Heart left ventricle (tissue), 16 donors: ENCODE measurements at regions of chrX and their contacts with region 1.

Region 1: GRCh38 chrX:109856974-109857373 is 123.9 kb upstream of the ACSL4 start:
- DNase-seq: no peak
- ATAC-seq: no peak
- H3K4me3 ChIP-seq: peak overlapping the region in 1 of 12 donors; percentile 24
- H3K27ac ChIP-seq: peak overlapping the region in 9 of 12 donors; percentile 0 to 59 (median 33)
- H3K4me1 ChIP-seq: peaks cover 0 to 16% (median 0%) of the 10 kb centered on the region in 12 donors
- H3K27me3 ChIP-seq: peaks cover 0 to 12% (median 0%) of the 10 kb centered on the region in 9 donors
- CTCF ChIP-seq: peak; percentile 68 to 85 (median 73)
- POLR2A ChIP-seq: no peak

Region 2: DNA sequence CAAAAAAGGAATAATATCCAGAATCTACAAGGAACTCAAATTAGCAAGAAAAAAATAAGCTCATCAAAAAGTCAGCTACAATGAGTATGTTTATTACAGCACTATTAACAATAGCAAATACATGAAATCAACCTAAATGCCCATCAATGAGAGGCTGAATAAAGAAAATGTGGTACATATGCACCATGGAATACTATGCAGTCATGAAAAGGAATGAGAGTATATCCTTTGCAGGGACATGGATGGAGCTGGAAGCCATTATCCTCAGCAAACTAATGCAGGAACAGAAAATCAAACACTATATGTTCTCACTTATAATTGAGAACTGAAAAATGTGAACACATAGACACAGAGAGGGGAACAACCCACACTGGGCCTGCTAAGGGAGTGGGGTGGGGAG is 942.2 kb before region 1 on chrX:
- intact Hi-C with region 1: no loop called
- DNase-seq: no peak
- ATAC-seq: no peak
- H3K4me3 ChIP-seq: no peak overlapping the region
- H3K27ac ChIP-seq: no peak overlapping the region
- H3K4me1 ChIP-seq: no peaks in the 10 kb centered on the region
- H3K27me3 ChIP-seq: no peaks in the 10 kb centered on the region
- CTCF ChIP-seq: no peak
- POLR2A ChIP-seq: no peak

Region 3: DNA sequence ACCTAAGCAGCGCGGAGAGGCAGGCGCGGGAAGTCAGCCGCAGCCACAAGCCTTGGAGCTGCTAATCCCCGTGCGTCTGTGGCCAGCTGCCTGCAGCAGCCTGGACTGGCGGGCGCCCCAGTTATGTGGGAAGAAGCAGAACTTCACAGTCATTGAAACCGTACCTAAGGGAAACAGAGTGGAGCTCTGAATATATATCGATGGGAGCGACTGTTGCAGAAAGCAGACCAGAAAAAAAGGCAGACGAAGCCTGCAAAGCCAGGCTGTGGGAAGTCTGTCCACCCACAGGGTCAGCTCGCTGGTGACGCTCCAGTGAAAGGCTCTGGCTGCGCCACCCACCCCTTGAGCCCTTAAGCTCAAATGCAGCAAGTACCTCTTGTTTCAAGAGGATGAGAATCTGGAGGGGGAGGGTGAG is 256.7 kb before region 1 on chrX:
- intact Hi-C with region 1: no loop called
- DNase-seq: peak in 4 of 5 donors; percentile 10 to 33 (median 28)
- ATAC-seq: peak in 1 of 4 donors; percentile 47
- H3K4me3 ChIP-seq: no peak overlapping the region
- H3K27ac ChIP-seq: no peak overlapping the region
- H3K4me1 ChIP-seq: no peaks in the 10 kb centered on the region
- H3K27me3 ChIP-seq: peaks cover 0 to 38% (median 0%) of the 10 kb centered on the region in 9 donors
- CTCF ChIP-seq: no peak
- POLR2A ChIP-seq: no peak

Region 4: DNA sequence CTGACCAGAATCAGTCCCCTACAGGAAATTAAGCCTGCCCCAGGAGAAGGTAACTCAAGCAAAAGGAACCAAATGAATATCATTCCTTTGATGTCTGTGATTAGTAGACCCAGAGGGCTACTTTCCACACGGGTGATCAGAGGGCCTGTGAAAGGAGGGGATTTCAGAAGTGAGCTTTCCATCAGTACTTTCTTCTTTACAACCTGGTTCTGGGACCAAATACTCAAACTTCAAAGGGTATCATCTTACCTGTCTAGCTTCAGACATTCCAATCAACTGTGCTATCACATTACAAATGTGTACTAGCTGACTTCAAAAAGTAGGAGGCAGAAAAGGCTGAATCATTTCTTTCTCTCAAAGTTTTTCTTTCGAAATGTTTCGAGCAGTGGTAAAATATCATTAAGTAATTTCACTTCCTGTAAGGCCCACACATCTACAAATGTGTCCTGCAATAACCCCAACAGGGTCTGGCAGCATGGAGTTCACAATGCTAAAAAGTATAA is 147.8 kb before region 1 on chrX:
- intact Hi-C with region 1: loop called in 8 of 10 experiments (anchors 2 to 10 kb)
- DNase-seq: no peak
- ATAC-seq: peak in 3 of 4 donors; percentile 27 to 63 (median 40)
- H3K4me3 ChIP-seq: peak overlapping the region in 1 of 12 donors; percentile 5
- H3K27ac ChIP-seq: peak overlapping the region in 5 of 12 donors; percentile 23 to 81 (median 64)
- H3K4me1 ChIP-seq: peaks cover 0 to 75% (median 7%) of the 10 kb centered on the region in 12 donors
- H3K27me3 ChIP-seq: peaks cover 0 to 10% (median 0%) of the 10 kb centered on the region in 9 donors
- CTCF ChIP-seq: no peak
- POLR2A ChIP-seq: no peak

Region 5: GRCh38 chrX:109714340-109714958 is 142.5 kb before region 1 on chrX:
- intact Hi-C with region 1: loop called in 9 of 10 experiments (anchors 2 to 10 kb)
- DNase-seq: no peak
- ATAC-seq: no peak
- H3K4me3 ChIP-seq: no peak overlapping the region
- H3K27ac ChIP-seq: no peak overlapping the region
- H3K4me1 ChIP-seq: peaks cover 0 to 52% (median 11%) of the 10 kb centered on the region in 12 donors
- H3K27me3 ChIP-seq: peaks cover 0 to 10% (median 0%) of the 10 kb centered on the region in 9 donors
- CTCF ChIP-seq: no peak
- POLR2A ChIP-seq: no peak

Region 6: GRCh38 chrX:109720947-109721346 is 136.0 kb before region 1 on chrX:
- intact Hi-C with region 1: loop called in 5 of 10 experiments (anchors 5 to 10 kb)
- DNase-seq: no peak
- ATAC-seq: no peak
- H3K4me3 ChIP-seq: no peak overlapping the region
- H3K27ac ChIP-seq: peak overlapping the region in 1 of 12 donors; percentile 35
- H3K4me1 ChIP-seq: peaks cover 0 to 15% (median 7%) of the 10 kb centered on the region in 12 donors
- H3K27me3 ChIP-seq: peaks cover 0 to 4% (median 0%) of the 10 kb centered on the region in 9 donors
- CTCF ChIP-seq: no peak
- POLR2A ChIP-seq: no peak